IMR-90 (cell line): ENCODE measurements at regions of chr7 and their contacts with region 1.

Region 1: GRCh38 chr7:55132890-55133551 is 114.2 kb downstream of the EGFR start:
- DNase-seq: peak; percentile 100
- ATAC-seq: peak; percentile 72
- H3K4me3 ChIP-seq: no peak overlapping the region
- H3K27ac ChIP-seq: peak overlapping the region; percentile 94
- H3K4me1 ChIP-seq: peaks cover 44% of the 10 kb centered on the region
- H3K27me3 ChIP-seq: no peaks in the 10 kb centered on the region
- CTCF ChIP-seq: no peak
- POLR2A ChIP-seq: peak; percentile 43
- RAD21 ChIP-seq: peak; percentile 26; the same call in 1 of the 2 replicates

Region 2: DNA sequence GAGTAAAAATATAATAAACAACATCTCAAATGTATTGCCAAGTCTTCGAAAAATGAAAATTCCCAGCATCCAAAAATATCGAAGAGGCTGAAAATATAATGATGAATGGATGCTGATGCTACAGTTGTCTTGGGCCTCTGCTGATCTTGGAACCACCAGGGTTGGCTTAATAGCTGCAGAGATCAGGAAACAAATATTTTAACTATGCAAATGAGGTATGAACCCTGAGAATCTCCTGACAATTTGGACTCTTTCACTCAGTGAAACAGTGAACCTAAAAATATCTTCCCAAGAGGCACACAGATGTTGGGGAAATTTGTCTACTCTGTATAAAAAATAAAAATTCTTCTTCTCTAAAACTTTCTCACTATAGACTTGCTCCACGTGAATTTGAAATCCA is 211.9 kb before region 1 on chr7:
- CTCF ChIA-PET with region 1: no interaction called
- POLR2A ChIA-PET with region 1: no interaction called
- dilution Hi-C with region 1: no loop called
- in situ Hi-C with region 1: no loop called
- intact Hi-C with region 1: loop called (anchors 5 kb)
- DNase-seq: no peak
- ATAC-seq: peak; percentile 49
- H3K4me3 ChIP-seq: no peak overlapping the region
- H3K27ac ChIP-seq: no peak overlapping the region
- H3K4me1 ChIP-seq: no peaks in the 10 kb centered on the region
- H3K27me3 ChIP-seq: no peaks in the 10 kb centered on the region
- CTCF ChIP-seq: no peak
- POLR2A ChIP-seq: no peak
- RAD21 ChIP-seq: no peak

Region 3: GRCh38 chr7:55005241-55005851 is 127.7 kb before region 1 on chr7:
- CTCF ChIA-PET with region 1: no interaction called
- POLR2A ChIA-PET with region 1: no interaction called
- dilution Hi-C with region 1: no loop called
- in situ Hi-C with region 1: no loop called
- intact Hi-C with region 1: no loop called
- DNase-seq: no peak
- ATAC-seq: no peak
- H3K4me3 ChIP-seq: no peak overlapping the region
- H3K27ac ChIP-seq: no peak overlapping the region
- H3K4me1 ChIP-seq: no peaks in the 10 kb centered on the region
- H3K27me3 ChIP-seq: no peaks in the 10 kb centered on the region
- CTCF ChIP-seq: no peak
- POLR2A ChIP-seq: no peak
- RAD21 ChIP-seq: no peak

Region 4: DNA sequence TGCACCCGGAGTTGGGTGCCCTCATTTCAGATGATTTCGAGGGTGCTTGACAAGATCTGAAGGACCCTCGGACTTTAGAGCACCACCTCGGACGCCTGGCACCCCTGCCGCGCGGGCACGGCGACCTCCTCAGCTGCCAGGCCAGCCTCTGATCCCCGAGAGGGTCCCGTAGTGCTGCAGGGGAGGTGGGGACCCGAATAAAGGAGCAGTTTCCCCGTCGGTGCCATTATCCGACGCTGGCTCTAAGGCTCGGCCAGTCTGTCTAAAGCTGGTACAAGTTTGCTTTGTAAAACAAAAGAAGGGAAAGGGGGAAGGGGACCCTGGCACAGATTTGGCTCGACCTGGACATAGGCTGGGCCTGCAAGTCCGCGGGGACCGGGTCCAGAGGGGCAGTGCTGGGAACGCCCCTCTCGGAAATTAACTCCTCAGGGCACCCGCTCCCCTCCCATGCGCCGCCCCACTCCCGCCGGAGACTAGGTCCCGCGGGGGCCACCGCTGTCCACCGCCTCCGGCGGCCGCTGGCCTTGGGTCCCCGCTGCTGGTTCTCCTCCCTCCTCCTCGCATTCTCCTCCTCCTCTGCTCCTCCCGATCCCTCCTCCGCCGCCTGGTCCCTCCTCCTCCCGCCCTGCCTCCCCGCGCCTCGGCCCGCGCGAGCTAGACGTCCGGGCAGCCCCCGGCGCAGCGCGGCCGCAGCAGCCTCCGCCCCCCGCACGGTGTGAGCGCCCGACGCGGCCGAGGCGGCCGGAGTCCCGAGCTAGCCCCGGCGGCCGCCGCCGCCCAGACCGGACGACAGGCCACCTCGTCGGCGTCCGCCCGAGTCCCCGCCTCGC is 114.4 kb before region 1 on chr7 and contains the start of gene EGFR:
- CTCF ChIA-PET with region 1: no interaction called
- POLR2A ChIA-PET with region 1: no interaction called
- dilution Hi-C with region 1: no loop called
- in situ Hi-C with region 1: no loop called
- intact Hi-C with region 1: loop called (anchors 5 kb)
- DNase-seq: peak; percentile 80
- ATAC-seq: peak; percentile 94
- H3K4me3 ChIP-seq: peak within 1 kb of the TSS; percentile 98
- H3K27ac ChIP-seq: peak within 1 kb of the TSS; percentile 97
- H3K4me1 ChIP-seq: peaks cover 13% of the 10 kb centered on the region
- H3K27me3 ChIP-seq: no peaks in the 10 kb centered on the region
- CTCF ChIP-seq: no peak
- POLR2A ChIP-seq: peak; percentile 77
- RAD21 ChIP-seq: no peak
- total RNA-seq, gene EGFR: 60.4 and 63.9 TPM in 2 replicates

Region 5: GRCh38 chr7:55086413-55087201 is 46.4 kb before region 1 on chr7:
- CTCF ChIA-PET with region 1: interaction called, 3 read pairs
- POLR2A ChIA-PET with region 1: interaction called, 5 read pairs
- dilution Hi-C with region 1: no loop called
- in situ Hi-C with region 1: no loop called
- intact Hi-C with region 1: loop called (anchors 1 kb)
- DNase-seq: peak; percentile 90
- ATAC-seq: peak; percentile 79
- H3K4me3 ChIP-seq: peak overlapping the region; percentile 41
- H3K27ac ChIP-seq: peak overlapping the region; percentile 99
- H3K4me1 ChIP-seq: peaks cover 40% of the 10 kb centered on the region
- H3K27me3 ChIP-seq: no peaks in the 10 kb centered on the region
- CTCF ChIP-seq: peak; percentile 4; the same call in 1 of the 2 replicates
- POLR2A ChIP-seq: no peak
- RAD21 ChIP-seq: 0 out of 2 replicates have a peak, but pooled peaks have one; percentile 7